Ascending aorta (tissue), 2 donors: ENCODE measurements at regions of chr16 and their contacts with region 1.

Region 1: DNA sequence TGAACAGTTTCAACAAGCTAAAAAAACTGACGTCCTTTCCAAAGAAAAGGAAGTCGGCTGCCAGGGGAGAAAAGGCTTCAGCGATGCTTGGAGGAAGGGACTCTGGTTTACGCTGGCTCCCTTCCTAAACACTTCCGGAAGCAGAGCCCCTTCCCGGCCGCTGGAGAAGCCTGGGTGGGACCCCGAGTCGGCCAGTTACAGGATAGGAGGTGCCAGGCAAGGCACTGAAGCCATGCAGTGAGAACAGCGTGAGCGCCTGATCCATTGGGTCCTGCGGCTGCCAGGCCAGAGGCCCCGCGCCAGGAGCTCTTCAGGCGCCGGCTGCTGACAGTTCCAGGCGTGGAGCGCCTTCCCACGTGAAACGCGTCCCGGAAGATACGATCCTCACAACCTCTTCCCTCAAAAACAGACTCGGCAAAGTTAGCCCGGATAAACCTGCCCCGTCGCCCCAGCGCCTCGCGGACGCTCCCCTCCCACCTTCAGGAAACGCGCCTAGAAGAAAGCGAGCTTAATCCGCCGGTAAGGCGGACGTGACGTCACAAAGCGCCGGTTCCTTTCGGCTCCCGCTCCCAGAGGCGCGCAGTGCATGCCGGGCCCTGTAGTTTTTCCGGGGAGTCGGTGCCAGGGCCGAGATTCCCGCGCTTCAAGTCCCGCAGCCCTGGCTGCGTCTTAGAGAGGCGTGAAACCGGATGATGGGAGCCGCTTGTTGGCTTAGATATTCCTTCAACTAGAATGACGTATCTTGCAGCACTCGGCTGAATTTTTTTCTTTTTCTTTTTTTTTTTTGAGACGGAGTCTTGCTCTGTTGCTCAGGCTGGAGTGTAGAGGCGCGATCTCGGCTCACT is at the start of gene ADAT1:
- DNase-seq: peak; percentile 97 to 100
- H3K4me3 ChIP-seq: peak within 1 kb of the TSS; percentile 67 to 75
- H3K27ac ChIP-seq: peak within 1 kb of the TSS; percentile 91 to 95
- H3K4me1 ChIP-seq: peaks cover 0 to 27% of the 10 kb centered on the region in 2 donors
- H3K27me3 ChIP-seq: no peaks in the 10 kb centered on the region
- CTCF ChIP-seq: no peak
- total RNA-seq, gene ADAT1: 21.2 TPM

Region 2: DNA sequence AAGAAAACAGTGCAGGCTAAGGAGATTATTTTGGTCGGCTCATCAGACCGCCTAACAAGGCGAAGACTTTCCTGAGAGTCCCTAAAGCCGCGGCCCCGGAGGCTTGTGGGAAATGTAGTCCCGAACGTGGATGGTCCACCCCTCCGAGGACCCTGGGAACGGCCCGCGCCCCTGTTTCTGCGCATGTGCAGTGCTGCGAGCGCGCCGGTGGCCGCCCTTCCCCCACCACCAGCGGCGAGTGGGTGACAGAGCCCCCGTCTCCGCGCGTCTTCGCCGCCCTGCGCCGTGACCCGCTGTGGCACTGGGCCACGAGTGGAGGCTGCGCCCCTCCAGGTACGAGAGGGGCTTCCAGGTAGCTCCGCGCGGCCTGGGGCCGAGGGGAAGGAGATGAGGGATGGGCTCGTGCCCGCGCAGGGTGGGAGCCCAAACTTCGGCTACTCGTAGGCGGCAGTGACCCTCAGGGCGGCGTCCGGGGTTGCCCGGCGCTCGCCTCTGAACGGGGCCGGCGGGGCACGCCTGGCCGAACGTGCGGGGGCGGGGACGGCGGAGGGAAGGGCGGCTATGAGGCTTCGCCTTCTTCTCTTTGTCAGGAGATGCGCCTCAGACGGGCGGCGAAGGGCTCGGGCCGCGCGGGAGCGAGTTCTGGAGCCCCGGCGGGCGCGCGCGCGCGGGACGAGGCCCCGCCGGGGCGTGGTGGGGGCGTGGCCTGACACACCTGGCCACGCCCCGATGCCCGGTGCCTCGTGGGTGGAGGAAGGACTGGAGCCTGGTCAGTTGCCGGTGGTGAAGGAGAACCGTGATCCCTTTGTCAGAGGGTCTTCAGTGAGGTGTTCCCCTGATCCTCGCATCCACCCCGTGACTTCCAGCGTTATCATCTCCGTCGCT is 474.4 kb before region 1 on chr16 and contains the start of gene ZFP1:
- intact Hi-C with region 1: loop called (anchors 2 kb)
- DNase-seq: peak; percentile 83 to 98
- H3K4me3 ChIP-seq: peak within 1 kb of the TSS; percentile 99 to 100
- H3K27ac ChIP-seq: peak within 1 kb of the TSS; percentile 93 to 99
- H3K4me1 ChIP-seq: peaks cover 0 to 6% of the 10 kb centered on the region in 2 donors
- H3K27me3 ChIP-seq: no peaks in the 10 kb centered on the region
- CTCF ChIP-seq: no peak
- total RNA-seq, gene ZFP1: 6.8 TPM

Region 3: GRCh38 chr16:75519881-75520280 is 103.1 kb before region 1 on chr16:
- intact Hi-C with region 1: loop called (anchors 1 kb)
- DNase-seq: no peak
- H3K4me3 ChIP-seq: no peak overlapping the region
- H3K27ac ChIP-seq: no peak overlapping the region
- H3K4me1 ChIP-seq: peaks cover 0 to 3% of the 10 kb centered on the region in 2 donors
- H3K27me3 ChIP-seq: no peaks in the 10 kb centered on the region
- CTCF ChIP-seq: no peak

Region 4: DNA sequence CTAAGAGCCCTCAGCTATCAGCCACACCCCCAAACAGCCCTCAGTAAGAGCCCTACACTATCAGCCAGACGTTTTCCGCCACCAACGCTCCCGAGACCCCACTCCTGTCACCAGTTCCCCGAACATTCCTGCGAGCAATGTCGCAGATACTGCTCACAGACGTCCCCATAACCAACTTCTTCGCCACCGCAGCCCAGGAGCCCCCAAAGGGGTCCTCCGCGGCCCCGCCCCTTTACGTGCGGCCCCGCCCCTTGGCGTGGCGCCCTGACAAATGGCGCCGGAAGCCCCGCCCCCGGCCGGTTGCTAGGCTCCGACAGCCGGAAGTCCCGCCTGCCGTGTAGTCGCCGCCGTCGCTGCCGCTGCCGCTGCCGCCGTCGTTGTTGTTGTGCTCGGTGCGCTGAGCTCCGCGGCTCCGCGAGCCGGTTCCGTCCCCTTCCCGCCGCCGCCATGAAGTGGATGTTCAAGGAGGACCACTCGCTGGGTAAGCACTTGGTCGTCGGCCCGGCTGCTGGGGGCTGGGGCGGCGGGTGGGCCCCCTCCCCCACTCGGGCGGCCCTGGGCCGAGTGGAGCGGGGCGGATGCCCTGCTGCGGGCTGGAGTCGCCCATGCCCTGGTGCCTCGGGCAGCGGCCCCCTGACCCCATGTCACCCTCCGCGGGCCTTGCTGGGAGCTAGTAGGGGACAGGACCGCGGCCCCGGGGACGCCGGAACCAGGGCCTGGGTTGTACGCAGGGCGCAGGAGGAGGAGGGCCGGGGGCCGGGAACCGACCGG is 56.8 kb before region 1 on chr16 and contains the start of gene GABARAPL2:
- intact Hi-C with region 1: loop called (anchors 2 kb)
- DNase-seq: peak; percentile 23 to 90
- H3K4me3 ChIP-seq: peak within 1 kb of the TSS; percentile 93 to 96
- H3K27ac ChIP-seq: peak within 1 kb of the TSS; percentile 65 to 82
- H3K4me1 ChIP-seq: peaks cover 10 to 47% of the 10 kb centered on the region in 2 donors
- H3K27me3 ChIP-seq: no peaks in the 10 kb centered on the region
- CTCF ChIP-seq: no peak
- total RNA-seq, gene GABARAPL2: 56.1 TPM

Region 5: GRCh38 chr16:75647492-75648264 is 24.7 kb after region 1 on chr16 and contains the starts of genes KARS1 and TERF2IP:
- intact Hi-C with region 1: loop called (anchors 1 kb)
- DNase-seq: peak; percentile 75 to 95
- H3K4me3 ChIP-seq: peak within 1 kb of the TSS; percentile 96 to 97
- H3K27ac ChIP-seq: peak within 1 kb of the TSS; percentile 96 to 97
- H3K4me1 ChIP-seq: peaks cover 9 to 32% of the 10 kb centered on the region in 2 donors
- H3K27me3 ChIP-seq: no peaks in the 10 kb centered on the region
- CTCF ChIP-seq: no peak
- total RNA-seq, gene KARS1: 65.2 TPM
- total RNA-seq, gene TERF2IP: 41.0 TPM